ENCODE measurements at regions of chr11 and their contacts with region 1.

Region 1: GRCh38 chr11:11787305-11788062 is 54.3 kb upstream of the USP47 start:
- DNase-seq: peak; percentile 70 to 79
- H3K4me3 ChIP-seq: no peak overlapping the region
- H3K27ac ChIP-seq: no peak overlapping the region
- H3K4me1 ChIP-seq: no peaks in the 10 kb centered on the region
- H3K27me3 ChIP-seq: no peaks in the 10 kb centered on the region
- CTCF ChIP-seq: peak; percentile 83 to 93

Region 2: DNA sequence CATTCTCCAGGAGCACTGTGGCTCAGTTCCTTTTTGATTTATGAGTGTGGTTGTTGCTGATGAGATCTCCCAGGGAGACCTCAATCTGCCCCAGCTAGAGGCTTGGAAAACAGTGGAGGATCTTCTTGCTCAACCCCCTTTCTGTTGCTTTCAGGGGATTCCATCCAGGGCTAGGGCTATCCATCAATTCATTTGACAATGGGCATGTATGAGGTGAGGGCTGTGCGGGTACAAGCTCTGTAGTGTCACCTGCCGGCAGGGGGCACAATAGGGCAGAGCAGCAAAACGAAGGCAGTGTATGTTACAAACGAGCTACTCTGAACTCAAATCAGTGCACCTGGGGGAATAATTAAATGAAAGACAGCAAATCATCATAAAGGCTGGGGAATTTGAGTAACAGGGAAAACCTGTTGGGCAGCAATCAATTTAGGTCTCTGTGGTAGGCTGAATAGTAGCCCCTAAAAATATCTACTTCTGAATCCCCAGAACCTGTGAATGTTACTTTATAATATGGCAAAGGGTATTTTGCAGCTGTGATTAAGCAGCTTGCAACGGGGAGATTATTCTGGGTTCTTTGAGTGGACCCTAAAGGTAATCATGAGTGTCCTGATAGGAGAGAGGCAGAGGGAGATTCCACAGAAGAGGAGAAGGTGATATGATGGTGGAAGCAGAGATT is 759.3 kb before region 1 on chr11:
- intact Hi-C with region 1: loop called (anchors 2 kb)
- DNase-seq: peak; percentile 70 to 84
- H3K4me3 ChIP-seq: no peak overlapping the region
- H3K27ac ChIP-seq: no peak overlapping the region
- H3K4me1 ChIP-seq: no peaks in the 10 kb centered on the region
- H3K27me3 ChIP-seq: no peaks in the 10 kb centered on the region
- CTCF ChIP-seq: peak; percentile 79 to 81

Region 3: GRCh38 chr11:11538277-11538960 is 249.1 kb before region 1 on chr11:
- intact Hi-C with region 1: loop called (anchors 10 kb)
- DNase-seq: peak in 1 of 2 donors; percentile 85
- H3K4me3 ChIP-seq: peak overlapping the region in 1 of 2 donors; percentile 4
- H3K27ac ChIP-seq: peak overlapping the region; percentile 69 to 75
- H3K4me1 ChIP-seq: peaks cover 0 to 71% (median 53%) of the 10 kb centered on the region in 4 donors
- H3K27me3 ChIP-seq: no peaks in the 10 kb centered on the region
- CTCF ChIP-seq: no peak

Region 4: DNA sequence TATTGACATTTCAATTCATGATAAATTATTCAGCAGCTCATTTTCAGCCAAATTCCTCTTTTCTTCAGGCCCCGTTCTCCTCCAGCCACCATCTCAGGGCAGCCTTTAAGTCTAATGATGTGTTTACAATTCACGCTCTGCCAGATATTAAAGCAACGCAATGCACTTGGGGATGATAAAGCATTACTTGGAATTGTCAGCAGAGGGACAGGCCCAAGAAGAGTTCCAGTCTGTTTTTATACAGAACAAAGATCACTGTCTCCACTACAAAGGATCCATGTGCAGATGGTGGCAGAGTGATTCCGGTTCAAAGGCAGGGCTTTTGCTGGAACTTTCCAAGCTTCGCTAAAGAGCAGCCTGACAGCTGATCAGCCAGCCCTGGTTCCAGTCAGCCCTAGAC is 152.0 kb before region 1 on chr11:
- intact Hi-C with region 1: loop called (anchors 10 kb)
- DNase-seq: no peak
- H3K4me3 ChIP-seq: no peak overlapping the region
- H3K27ac ChIP-seq: no peak overlapping the region
- H3K4me1 ChIP-seq: no peaks in the 10 kb centered on the region
- H3K27me3 ChIP-seq: no peaks in the 10 kb centered on the region
- CTCF ChIP-seq: no peak

Measured in tibial artery (tissue), 4 donors.